PC-3 (cell line): ENCODE measurements at regions of chr6 and their contacts with region 1.

Region 1: GRCh38 chr6:159789377-159790148 is at the start of gene TCP1:
- DNase-seq: peak; percentile 98
- ATAC-seq: peak; percentile 85
- H3K4me3 ChIP-seq: peak within 1 kb of the TSS; percentile 98
- H3K27ac ChIP-seq: peak within 1 kb of the TSS; percentile 82
- H3K4me1 ChIP-seq: peaks cover 30% of the 10 kb centered on the region; the same call in 1 of the 2 replicates
- H3K27me3 ChIP-seq: no peaks in the 10 kb centered on the region
- CTCF ChIP-seq: no peak
- total RNA-seq, gene TCP1: 253 and 280 TPM in 2 replicates

Region 2: DNA sequence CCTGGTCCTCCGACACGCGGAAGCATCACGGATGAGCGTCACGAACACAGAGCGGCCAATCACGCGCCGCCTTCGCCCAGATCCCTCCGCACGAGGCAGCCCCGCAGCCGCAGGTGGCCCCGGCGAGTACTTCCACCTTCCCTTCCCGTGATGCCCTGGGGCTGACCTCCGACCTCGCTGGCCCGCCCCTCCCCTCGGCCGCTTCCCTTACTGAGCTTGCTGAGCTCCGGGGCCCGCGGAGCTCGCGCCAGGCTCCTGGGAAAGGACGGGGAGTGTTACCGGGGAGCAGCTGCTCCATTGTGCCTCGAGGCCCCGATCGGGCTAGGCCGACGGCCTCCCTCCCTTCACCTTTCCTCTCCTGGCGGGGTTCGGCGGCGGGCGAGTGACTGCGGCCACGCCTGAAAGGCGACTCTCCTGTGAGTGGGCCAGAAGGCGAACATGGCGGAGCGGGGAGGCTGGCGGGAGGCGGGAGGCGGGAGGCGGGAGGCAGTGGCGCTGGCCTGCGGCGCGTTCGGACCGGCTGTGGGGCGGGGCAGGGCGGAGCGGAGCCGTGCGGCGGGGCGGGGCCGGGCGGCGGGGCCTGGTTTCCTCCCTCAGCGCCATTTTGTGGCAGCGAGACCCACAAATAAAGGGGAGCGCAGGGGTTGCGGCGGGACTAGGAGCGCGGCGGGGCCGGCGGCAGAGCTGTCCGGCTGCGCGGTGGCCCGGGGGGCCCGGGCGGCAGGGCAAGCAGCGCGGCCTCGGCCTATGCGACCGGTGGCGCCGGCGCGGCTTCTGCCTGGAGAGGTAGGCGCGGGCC is 62.4 kb before region 1 on chr6 and contains the start of gene WTAP:
- CTCF ChIA-PET with region 1: no interaction called
- POLR2A ChIA-PET with region 1: interaction called, 9 read pairs
- intact Hi-C with region 1: loop called (anchors 2 kb)
- DNase-seq: peak; percentile 87
- ATAC-seq: peak; percentile 81
- H3K4me3 ChIP-seq: peak within 1 kb of the TSS; percentile 99
- H3K27ac ChIP-seq: peak within 1 kb of the TSS; percentile 96
- H3K4me1 ChIP-seq: peaks cover 16% of the 10 kb centered on the region
- H3K27me3 ChIP-seq: no peaks in the 10 kb centered on the region
- CTCF ChIP-seq: no peak
- total RNA-seq, gene WTAP: 50.8 and 54.5 TPM in 2 replicates

Region 3: GRCh38 chr6:159761873-159762680 is 27.5 kb before region 1 on chr6 and contains the start of gene ACAT2:
- CTCF ChIA-PET with region 1: no interaction called
- POLR2A ChIA-PET with region 1: interaction called, 3 read pairs
- intact Hi-C with region 1: loop called (anchors 1 kb)
- DNase-seq: peak; percentile 92
- ATAC-seq: peak; percentile 92
- H3K4me3 ChIP-seq: peak within 1 kb of the TSS; percentile 87
- H3K27ac ChIP-seq: peak within 1 kb of the TSS; percentile 95
- H3K4me1 ChIP-seq: peaks cover 21% of the 10 kb centered on the region
- H3K27me3 ChIP-seq: no peaks in the 10 kb centered on the region
- CTCF ChIP-seq: no peak
- total RNA-seq, gene ACAT2: 29.0 and 36.0 TPM in 2 replicates